ENCODE measurements at regions of chr7 and their contacts with region 1.

Region 1: GRCh38 chr7:191981-192649 is at the start of gene FAM20C:
- DNase-seq: peak; percentile 95
- H3K4me3 ChIP-seq: peak within 1 kb of the TSS; percentile 53 to 85 (median 75)
- H3K27ac ChIP-seq: peak within 1 kb of the TSS; percentile 87 to 95 (median 94)
- H3K4me1 ChIP-seq: peaks cover 0 to 51% (median 47%) of the 10 kb centered on the region in 4 donors
- H3K27me3 ChIP-seq: no peaks in the 10 kb centered on the region
- CTCF ChIP-seq: no peak
- EP300 ChIP-seq: no peak
- POLR2A ChIP-seq: peak in 1 of 2 donors; percentile 58
- total RNA-seq, gene FAM20C: 18.4 to 51.3 (median 23.3) TPM

Region 2: DNA sequence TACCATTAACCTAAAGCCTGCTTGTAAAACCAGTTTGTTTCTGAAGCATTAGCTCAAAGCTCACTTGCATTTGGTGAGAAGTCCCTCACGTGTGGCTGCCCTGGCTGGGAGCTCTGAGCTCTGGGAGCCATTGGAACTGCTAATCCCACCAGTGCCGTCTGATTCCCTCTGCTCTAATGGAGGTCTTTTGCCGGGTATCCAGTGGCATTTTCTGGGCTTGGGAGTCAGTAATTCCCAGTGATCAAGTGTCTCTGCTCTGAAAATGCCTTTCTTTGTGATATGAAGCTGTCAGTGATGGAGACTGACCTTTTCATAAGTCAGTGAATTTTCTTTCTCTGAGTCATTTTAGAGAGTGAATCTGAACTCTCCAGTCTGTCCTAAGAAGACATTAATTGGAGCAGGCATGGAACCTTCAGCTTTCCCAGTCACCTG is 36.6 kb before region 1 on chr7:
- intact Hi-C with region 1: no loop called
- DNase-seq: no peak
- H3K4me3 ChIP-seq: no peak overlapping the region
- H3K27ac ChIP-seq: no peak overlapping the region
- H3K4me1 ChIP-seq: peaks cover 0 to 13% (median 4%) of the 10 kb centered on the region in 4 donors
- H3K27me3 ChIP-seq: peaks cover 0 to 2% (median 0%) of the 10 kb centered on the region in 3 donors
- CTCF ChIP-seq: no peak
- EP300 ChIP-seq: no peak
- POLR2A ChIP-seq: no peak

Region 3: GRCh38 chr7:234655-235578 is 42.8 kb after region 1 on chr7:
- intact Hi-C with region 1: loop called (anchors 5 kb)
- DNase-seq: peak; percentile 92
- H3K4me3 ChIP-seq: peak overlapping the region; percentile 8 to 31 (median 24)
- H3K27ac ChIP-seq: peak overlapping the region; percentile 84 to 97 (median 94)
- H3K4me1 ChIP-seq: peaks cover 0 to 73% (median 68%) of the 10 kb centered on the region in 4 donors
- H3K27me3 ChIP-seq: no peaks in the 10 kb centered on the region
- CTCF ChIP-seq: no peak
- EP300 ChIP-seq: peak in 2 of 4 donors; percentile 7 to 50
- POLR2A ChIP-seq: no peak